ENCODE measurements at regions of chr19 and their contacts with region 1.

Region 1: GRCh38 chr19:1373534-1374249 is 10.0 kb upstream of the NDUFS7 start:
- DNase-seq: no peak
- H3K4me3 ChIP-seq: no peak overlapping the region
- H3K27ac ChIP-seq: no peak overlapping the region
- H3K4me1 ChIP-seq: no peaks in the 10 kb centered on the region
- CTCF ChIP-seq: no peak

Region 2: GRCh38 chr19:1275260-1275975 is 98.3 kb before region 1 on chr19 and contains the start of gene FAM174C:
- CTCF ChIA-PET with region 1: no interaction called
- POLR2A ChIA-PET with region 1: no interaction called
- intact Hi-C with region 1: loop called (anchors 1 kb)
- DNase-seq: peak; percentile 98
- H3K4me3 ChIP-seq: peak within 1 kb of the TSS; percentile 95
- H3K27ac ChIP-seq: peak within 1 kb of the TSS; percentile 92
- H3K4me1 ChIP-seq: peaks cover 55% of the 10 kb centered on the region
- CTCF ChIP-seq: no peak
- total RNA-seq, gene FAM174C: 52.6 and 53.2 TPM in 2 replicates

Region 3: GRCh38 chr19:1315470-1316231 is 58.0 kb before region 1 on chr19:
- CTCF ChIA-PET with region 1: no interaction called
- POLR2A ChIA-PET with region 1: no interaction called
- intact Hi-C with region 1: loop called (anchors 5 kb)
- DNase-seq: no peak
- H3K4me3 ChIP-seq: no peak overlapping the region
- H3K27ac ChIP-seq: no peak overlapping the region
- H3K4me1 ChIP-seq: no peaks in the 10 kb centered on the region
- CTCF ChIP-seq: peak; percentile 66

Region 4: DNA sequence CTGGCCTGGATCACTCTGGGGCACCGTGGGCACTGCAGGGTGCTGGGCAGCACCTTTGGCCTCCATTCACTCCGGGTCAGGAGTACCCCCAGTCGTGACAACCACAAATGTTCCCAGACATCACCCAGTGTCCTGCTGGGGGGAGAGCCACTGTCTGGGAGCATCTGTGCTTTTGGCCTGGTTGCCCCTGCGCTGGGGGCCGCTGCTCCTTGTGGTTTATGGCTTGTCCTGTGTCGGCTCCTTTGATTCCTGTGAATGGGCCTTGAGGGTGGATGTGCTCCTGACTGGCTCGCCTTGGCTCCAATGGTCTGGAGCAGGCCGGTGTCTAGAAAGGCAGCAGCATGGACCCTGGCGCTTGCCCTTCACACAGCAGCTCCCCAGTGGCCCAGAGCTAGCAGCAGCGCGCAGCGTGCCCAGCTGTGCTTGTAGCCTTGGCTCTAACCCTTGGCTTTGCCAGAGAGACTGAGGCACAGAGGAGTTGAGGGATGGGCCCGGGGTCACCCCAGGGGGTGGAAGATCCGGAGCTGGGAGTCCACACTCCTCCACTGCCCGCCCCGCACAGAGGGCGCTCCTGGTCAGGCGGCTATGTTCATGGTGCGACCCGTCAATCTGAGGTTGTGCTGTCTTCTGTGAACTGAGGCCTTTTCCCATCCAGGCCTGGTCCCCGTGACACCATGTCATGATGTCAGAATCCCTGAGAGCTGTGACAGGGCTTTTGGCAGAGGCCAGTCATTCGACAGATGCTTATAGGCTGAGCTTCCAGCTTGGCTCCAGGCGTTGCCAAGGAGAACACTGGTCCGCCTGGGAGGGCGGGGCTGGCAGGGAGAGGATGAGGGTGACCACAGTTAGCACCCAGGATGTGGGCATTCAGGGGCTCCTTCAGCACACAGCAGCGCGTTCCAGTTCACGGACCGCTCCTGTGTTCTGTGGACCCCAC is 37.8 kb after region 1 on chr19:
- CTCF ChIA-PET with region 1: no interaction called
- POLR2A ChIA-PET with region 1: no interaction called
- intact Hi-C with region 1: no loop called
- DNase-seq: no peak
- H3K4me3 ChIP-seq: no peak overlapping the region
- H3K27ac ChIP-seq: no peak overlapping the region
- H3K4me1 ChIP-seq: peaks cover 16% of the 10 kb centered on the region
- CTCF ChIP-seq: no peak